CD8-positive, alpha-beta T cell (primary cell): ENCODE measurements at regions of chr12 and their contacts with region 1.

Region 1: DNA sequence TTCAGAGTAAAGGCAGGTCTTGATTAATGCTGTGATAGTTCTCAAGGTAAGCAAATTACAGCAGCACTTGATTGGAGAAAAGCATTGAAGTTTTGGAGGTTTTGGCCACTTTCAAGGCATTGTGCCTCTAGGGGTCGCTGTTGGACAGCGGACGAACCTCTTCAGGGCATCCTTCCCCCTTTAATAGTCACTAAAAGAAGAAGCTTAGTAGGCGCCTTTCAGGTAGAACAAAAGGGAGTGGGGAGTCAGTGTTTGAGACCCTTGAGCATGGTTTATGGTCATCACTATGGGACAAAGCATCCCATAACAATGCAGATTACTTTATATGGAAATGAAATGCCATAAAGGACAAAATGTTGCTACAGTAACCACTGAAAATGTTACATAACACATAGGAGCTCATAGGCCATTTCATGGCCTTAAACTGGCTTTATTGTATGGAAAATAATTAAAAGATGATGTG is 199.5 kb upstream of the DCN start:
- DNase-seq: peak; percentile 72 to 93 (median 85)
- ATAC-seq: peak; percentile 85
- H3K4me3 ChIP-seq: peak overlapping the region in 1 of 2 experiments; percentile 24
- H3K4me3 Mint-ChIP-seq: peak overlapping the region; percentile 76
- H3K27ac ChIP-seq: no peak overlapping the region
- H3K27ac Mint-ChIP-seq: peak overlapping the region; percentile 80
- H3K4me1 ChIP-seq: peaks cover 4% of the 10 kb centered on the region
- H3K4me1 Mint-ChIP-seq: peaks cover 10% of the 10 kb centered on the region
- H3K27me3 ChIP-seq: peaks cover 0 to 2% of the 10 kb centered on the region in 2 experiments
- H3K27me3 Mint-ChIP-seq: peaks cover 2% of the 10 kb centered on the region
- CTCF ChIP-seq: peak; percentile 84

Region 2: DNA sequence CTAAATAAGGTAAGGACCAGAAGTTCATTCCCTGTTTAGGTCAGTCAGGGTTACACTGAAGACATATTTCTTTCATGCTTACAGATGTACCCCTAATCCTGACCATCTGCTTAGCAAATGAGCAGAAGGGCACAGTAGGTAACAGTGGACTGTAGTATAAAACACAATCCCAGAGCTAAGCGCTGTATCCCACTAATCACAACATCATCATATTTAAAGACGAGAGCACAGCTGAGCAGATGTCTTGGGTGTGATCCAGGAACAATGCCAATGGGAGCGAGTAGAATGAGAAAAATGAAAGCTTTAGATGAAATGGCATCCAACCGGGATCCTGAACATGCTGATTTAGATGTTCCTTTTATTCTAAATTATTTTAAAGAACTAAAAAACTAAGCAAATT is 640.5 kb before region 1 on chr12:
- CTCF ChIA-PET with region 1: no interaction called
- POLR2A ChIA-PET with region 1: no interaction called
- intact Hi-C with region 1: no loop called
- DNase-seq: no peak
- ATAC-seq: no peak
- H3K4me3 ChIP-seq: no peak overlapping the region
- H3K4me3 Mint-ChIP-seq: no peak overlapping the region
- H3K27ac ChIP-seq: no peak overlapping the region
- H3K27ac Mint-ChIP-seq: no peak overlapping the region
- H3K4me1 ChIP-seq: no peaks in the 10 kb centered on the region
- H3K4me1 Mint-ChIP-seq: no peaks in the 10 kb centered on the region
- H3K27me3 ChIP-seq: no peaks in the 10 kb centered on the region
- H3K27me3 Mint-ChIP-seq: no peaks in the 10 kb centered on the region
- CTCF ChIP-seq: no peak

Region 3: GRCh38 chr12:91367234-91367849 is 14.8 kb before region 1 on chr12:
- CTCF ChIA-PET with region 1: interaction called, 32 read pairs
- POLR2A ChIA-PET with region 1: no interaction called
- intact Hi-C with region 1: no loop called
- DNase-seq: peak in 1 of 9 experiments; percentile 9
- ATAC-seq: no peak
- H3K4me3 ChIP-seq: no peak overlapping the region
- H3K4me3 Mint-ChIP-seq: no peak overlapping the region
- H3K27ac ChIP-seq: no peak overlapping the region
- H3K27ac Mint-ChIP-seq: no peak overlapping the region
- H3K4me1 ChIP-seq: no peaks in the 10 kb centered on the region
- H3K4me1 Mint-ChIP-seq: no peaks in the 10 kb centered on the region
- H3K27me3 ChIP-seq: no peaks in the 10 kb centered on the region
- H3K27me3 Mint-ChIP-seq: peaks cover 2% of the 10 kb centered on the region
- CTCF ChIP-seq: peak; percentile 49

Region 4: DNA sequence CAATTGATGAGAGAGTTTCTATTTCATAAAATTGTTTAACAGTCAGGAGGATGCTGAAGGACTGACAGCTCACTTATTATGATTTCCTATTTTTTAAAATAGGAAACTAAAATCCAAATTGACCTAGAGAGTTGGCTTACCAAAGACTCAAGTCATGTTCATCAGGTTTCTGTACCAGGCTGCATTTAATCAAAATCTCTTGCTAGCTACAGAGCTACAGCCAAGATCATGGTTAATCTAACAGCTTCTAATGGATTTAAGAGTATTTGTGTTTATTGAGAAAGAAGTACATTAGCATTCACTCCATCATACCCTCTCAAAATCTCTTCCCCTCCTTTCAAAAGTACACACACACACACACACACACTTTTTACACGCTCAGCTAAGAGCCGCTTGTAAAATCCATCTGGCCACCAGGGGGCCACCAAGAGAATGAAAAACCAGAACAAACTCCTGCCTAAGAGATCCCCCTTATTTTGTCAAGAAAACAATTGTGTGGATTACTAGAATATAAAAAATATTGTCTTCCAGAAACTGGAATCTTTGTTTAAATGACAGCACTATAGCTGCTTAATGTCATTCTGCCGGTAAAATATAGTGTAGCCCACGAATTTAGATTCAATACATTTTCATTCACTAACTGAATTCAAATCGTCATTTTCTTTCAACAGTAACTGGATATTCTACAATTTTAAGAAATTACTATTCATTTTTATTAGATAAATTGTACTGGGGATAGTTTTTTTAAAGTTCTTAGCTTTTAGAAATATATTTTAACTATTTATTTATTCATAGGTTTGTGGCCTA is 429.6 kb after region 1 on chr12:
- CTCF ChIA-PET with region 1: interaction called, 4 read pairs
- POLR2A ChIA-PET with region 1: interaction called, 4 read pairs
- intact Hi-C with region 1: loop called in 1 of 2 experiments (anchors 10 kb)
- DNase-seq: peak; percentile 69 to 87 (median 81)
- ATAC-seq: peak; percentile 89
- H3K4me3 ChIP-seq: no peak overlapping the region
- H3K4me3 Mint-ChIP-seq: no peak overlapping the region
- H3K27ac ChIP-seq: no peak overlapping the region
- H3K27ac Mint-ChIP-seq: peak overlapping the region; percentile 89
- H3K4me1 ChIP-seq: peaks cover 5% of the 10 kb centered on the region
- H3K4me1 Mint-ChIP-seq: peaks cover 30% of the 10 kb centered on the region
- H3K27me3 ChIP-seq: no peaks in the 10 kb centered on the region
- H3K27me3 Mint-ChIP-seq: no peaks in the 10 kb centered on the region
- CTCF ChIP-seq: peak; percentile 84

Region 5: DNA sequence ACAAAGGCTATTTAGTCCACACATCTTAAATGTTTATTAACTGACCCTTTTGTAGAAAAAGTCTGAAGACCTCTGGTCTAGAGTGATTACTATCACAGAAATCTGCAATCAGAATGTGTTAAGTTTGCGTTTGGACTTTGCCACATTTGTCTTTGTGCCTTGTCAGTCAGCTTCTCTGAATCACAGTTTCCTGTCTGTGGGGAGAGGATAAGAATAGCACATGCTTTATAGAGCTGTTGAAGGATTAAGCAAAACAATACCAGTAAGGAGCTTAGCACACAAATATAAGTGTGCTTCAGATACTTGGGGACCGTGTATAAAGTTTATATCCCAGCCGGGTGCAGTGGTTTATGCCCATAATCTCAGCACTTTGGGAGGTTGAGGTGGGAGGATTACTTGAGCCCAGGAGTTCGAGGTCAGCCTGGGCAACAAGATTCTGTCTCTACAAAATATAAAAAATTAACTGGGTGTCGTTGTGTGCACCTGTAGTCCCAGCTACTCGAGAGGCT is 826.6 kb after region 1 on chr12:
- CTCF ChIA-PET with region 1: interaction called, 6 read pairs
- POLR2A ChIA-PET with region 1: no interaction called
- intact Hi-C with region 1: loop called in 1 of 2 experiments (anchors 5 kb)
- DNase-seq: peak in 7 of 9 experiments; percentile 25 to 74 (median 32)
- ATAC-seq: peak; percentile 83
- H3K4me3 ChIP-seq: peak overlapping the region; percentile 28 to 32
- H3K4me3 Mint-ChIP-seq: peak overlapping the region; percentile 67
- H3K27ac ChIP-seq: peak overlapping the region; percentile 26 to 34
- H3K27ac Mint-ChIP-seq: peak overlapping the region; percentile 92
- H3K4me1 ChIP-seq: peaks cover 27% of the 10 kb centered on the region
- H3K4me1 Mint-ChIP-seq: peaks cover 40% of the 10 kb centered on the region
- H3K27me3 ChIP-seq: no peaks in the 10 kb centered on the region
- H3K27me3 Mint-ChIP-seq: no peaks in the 10 kb centered on the region
- CTCF ChIP-seq: no peak

Region 6: DNA sequence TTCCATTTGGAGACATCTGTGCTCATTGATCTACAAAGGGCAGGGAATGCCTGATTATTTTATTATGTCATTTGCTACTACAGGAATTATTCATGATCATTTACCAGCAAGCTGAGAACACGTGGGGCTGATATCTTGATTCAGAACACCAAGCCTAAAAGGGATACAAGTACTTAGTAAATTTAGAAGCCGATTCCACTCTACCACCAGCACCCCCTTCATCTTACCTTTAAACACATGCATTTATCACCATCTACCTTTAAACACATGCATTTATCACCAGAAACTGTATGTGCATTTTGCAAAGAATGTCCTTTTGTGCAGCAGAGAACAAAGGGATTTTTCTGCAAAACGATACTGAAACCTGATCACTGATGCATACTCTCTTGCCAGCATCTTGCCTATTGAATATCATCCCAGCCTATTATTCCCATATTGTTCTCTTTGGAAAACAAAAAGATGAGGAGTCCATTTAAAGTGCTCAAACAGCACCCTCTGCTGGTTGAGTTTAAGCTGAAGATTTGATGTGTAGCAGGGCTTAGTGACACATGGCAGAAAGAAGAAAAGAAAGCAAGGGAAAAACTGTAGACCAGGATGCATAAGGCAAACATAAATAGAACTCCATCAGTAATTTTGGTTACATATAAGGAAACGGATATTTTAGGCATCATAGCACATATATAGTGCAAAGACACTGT is 1188.1 kb after region 1 on chr12:
- CTCF ChIA-PET with region 1: interaction called, 92 read pairs
- POLR2A ChIA-PET with region 1: interaction called, 7 read pairs
- intact Hi-C with region 1: loop called (anchors 1 kb)
- DNase-seq: peak in 7 of 9 experiments; percentile 25 to 83 (median 45)
- ATAC-seq: peak; percentile 93
- H3K4me3 ChIP-seq: peak overlapping the region in 1 of 2 experiments; percentile 30
- H3K4me3 Mint-ChIP-seq: no peak overlapping the region
- H3K27ac ChIP-seq: no peak overlapping the region
- H3K27ac Mint-ChIP-seq: no peak overlapping the region
- H3K4me1 ChIP-seq: peaks cover 22% of the 10 kb centered on the region
- H3K4me1 Mint-ChIP-seq: peaks cover 6% of the 10 kb centered on the region
- H3K27me3 ChIP-seq: no peaks in the 10 kb centered on the region
- H3K27me3 Mint-ChIP-seq: no peaks in the 10 kb centered on the region
- CTCF ChIP-seq: peak; percentile 98

Region 7: DNA sequence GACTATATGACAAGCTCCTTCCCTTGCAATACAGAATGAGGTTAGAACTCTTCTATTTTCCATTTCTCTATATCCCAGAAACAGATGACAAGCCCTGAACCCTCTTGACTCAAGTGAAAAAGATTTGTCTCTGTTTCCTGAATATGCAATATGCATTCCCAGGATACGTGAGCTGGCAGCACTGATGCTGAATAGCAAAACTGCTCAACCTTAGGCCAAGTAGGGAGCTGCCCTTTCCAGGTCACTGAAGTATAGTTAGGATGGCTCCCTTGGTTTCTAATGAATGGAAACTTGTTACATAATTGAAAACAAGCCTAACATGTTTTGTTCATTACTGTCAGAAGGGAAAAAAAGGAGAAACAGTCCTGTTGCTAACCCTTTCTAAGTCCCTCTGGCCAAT is 1272.8 kb after region 1 on chr12:
- CTCF ChIA-PET with region 1: interaction called, 57 read pairs
- POLR2A ChIA-PET with region 1: interaction called, 3 read pairs
- intact Hi-C with region 1: loop called (anchors 1 kb)
- DNase-seq: no peak
- ATAC-seq: no peak
- H3K4me3 ChIP-seq: no peak overlapping the region
- H3K4me3 Mint-ChIP-seq: no peak overlapping the region
- H3K27ac ChIP-seq: no peak overlapping the region
- H3K27ac Mint-ChIP-seq: no peak overlapping the region
- H3K4me1 ChIP-seq: no peaks in the 10 kb centered on the region
- H3K4me1 Mint-ChIP-seq: peaks cover 2% of the 10 kb centered on the region
- H3K27me3 ChIP-seq: no peaks in the 10 kb centered on the region
- H3K27me3 Mint-ChIP-seq: peaks cover 2% of the 10 kb centered on the region
- CTCF ChIP-seq: no peak